AG04450 (cell line): ENCODE measurements at regions of chr1 and their contacts with region 1.

Region 1: GRCh38 chr1:193338194-193338593 is 151.8 kb upstream of the B3GALT2 start:
- DNase-seq: no peak
- H3K4me3 ChIP-seq: no peak overlapping the region
- H3K27ac ChIP-seq: no peak overlapping the region
- H3K27me3 ChIP-seq: no peaks in the 10 kb centered on the region
- CTCF ChIP-seq: 0 out of 2 replicates have a peak, but pooled peaks have one; percentile 17

Region 2: DNA sequence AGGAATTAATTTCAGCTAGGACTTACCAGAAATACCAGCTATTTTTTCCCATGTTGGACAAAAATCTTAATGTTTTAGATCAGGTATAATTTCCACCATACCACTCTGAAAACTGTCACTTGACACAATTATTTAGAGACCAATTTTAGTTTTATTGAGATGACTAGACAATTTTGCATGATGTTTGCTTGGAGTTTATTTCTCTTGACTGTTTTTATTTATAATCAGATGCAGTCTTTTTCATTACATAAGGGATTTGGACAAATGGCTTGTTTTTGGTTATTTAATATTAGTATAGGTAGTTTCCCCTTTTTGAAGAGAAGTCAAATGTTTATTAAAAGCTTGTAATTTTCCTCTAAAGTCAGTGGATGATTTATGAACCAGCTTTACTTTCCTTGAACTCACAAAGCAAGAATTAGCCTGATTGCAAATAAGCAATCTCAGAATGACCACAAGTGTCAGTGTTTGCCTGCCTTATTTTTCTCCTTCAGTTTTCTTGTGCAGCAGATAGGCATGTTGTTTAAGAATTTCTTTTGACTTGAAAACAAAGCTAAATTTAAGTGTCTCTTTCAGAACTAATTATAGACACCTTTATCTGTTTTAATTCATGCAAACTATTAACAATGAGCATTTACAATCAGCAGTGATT is 148.0 kb before region 1 on chr1:
- CTCF ChIA-PET with region 1: interaction called, 12 read pairs
- POLR2A ChIA-PET with region 1: interaction called, 4 read pairs
- DNase-seq: no peak
- H3K4me3 ChIP-seq: no peak overlapping the region
- H3K27ac ChIP-seq: no peak overlapping the region
- H3K27me3 ChIP-seq: no peaks in the 10 kb centered on the region
- CTCF ChIP-seq: peak; percentile 42